ENCODE measurements at regions of chr4 and their contacts with region 1.

Region 1: GRCh38 chr4:48944756-48945241 is 38.2 kb upstream of the OCIAD2 start:
- DNase-seq: peak in 4 of 5 donors; percentile 16 to 28 (median 18)
- H3K4me3 ChIP-seq: no peak overlapping the region
- H3K4me3 Mint-ChIP-seq: peak overlapping the region in 4 of 8 donors; percentile 30 to 72 (median 48)
- H3K27ac ChIP-seq: no peak overlapping the region
- H3K27ac Mint-ChIP-seq: peak overlapping the region in 4 of 7 donors; percentile 23 to 32 (median 27)
- H3K4me1 ChIP-seq: peaks cover 12% of the 10 kb centered on the region
- H3K4me1 Mint-ChIP-seq: peaks cover 7 to 13% (median 10%) of the 10 kb centered on the region in 4 donors
- H3K27me3 ChIP-seq: no peaks in the 10 kb centered on the region
- H3K27me3 Mint-ChIP-seq: no peaks in the 10 kb centered on the region

Region 2: DNA sequence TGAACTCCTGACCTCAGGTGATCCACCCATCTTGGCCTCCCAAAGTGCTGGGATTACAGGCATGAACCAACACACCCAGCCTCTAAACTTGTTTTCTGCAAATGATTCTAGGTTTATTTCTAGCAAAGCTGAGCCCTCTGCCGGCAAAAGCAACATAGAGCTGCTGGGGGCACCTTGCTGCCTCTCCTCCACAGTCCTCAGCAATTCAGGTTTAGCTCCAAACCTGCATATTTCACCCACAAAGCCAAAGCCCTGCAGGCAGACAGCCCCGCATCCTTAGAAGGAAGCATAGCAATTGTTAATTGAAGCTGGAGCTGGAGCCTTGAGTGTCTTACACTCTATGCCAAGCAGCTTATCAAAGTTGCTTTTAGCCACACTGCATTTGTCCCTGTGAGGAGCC is 13.3 kb before region 1 on chr4:
- CTCF ChIA-PET with region 1: interaction called, 11 read pairs
- POLR2A ChIA-PET with region 1: interaction called, 3 read pairs
- intact Hi-C with region 1: no loop called
- DNase-seq: no peak
- H3K4me3 ChIP-seq: no peak overlapping the region
- H3K4me3 Mint-ChIP-seq: no peak overlapping the region
- H3K27ac ChIP-seq: no peak overlapping the region
- H3K27ac Mint-ChIP-seq: no peak overlapping the region
- H3K4me1 ChIP-seq: no peaks in the 10 kb centered on the region
- H3K4me1 Mint-ChIP-seq: peaks cover 0 to 3% (median 0%) of the 10 kb centered on the region in 4 donors
- H3K27me3 ChIP-seq: no peaks in the 10 kb centered on the region
- H3K27me3 Mint-ChIP-seq: no peaks in the 10 kb centered on the region

Measured in CD4-positive, alpha-beta memory T cell (primary cell).